HAP-1 (cell line): ENCODE measurements at regions of chr20 and their contacts with region 1.

Region 1: GRCh38 chr20:4607287-4607713 is 114.4 kb upstream of the PRND start:
- DNase-seq: peak; percentile 72 to 76
- H3K4me3 ChIP-seq: no peak overlapping the region
- H3K4me1 ChIP-seq: peaks cover 6% of the 10 kb centered on the region
- H3K27me3 ChIP-seq: peaks cover 21% of the 10 kb centered on the region

Region 2: DNA sequence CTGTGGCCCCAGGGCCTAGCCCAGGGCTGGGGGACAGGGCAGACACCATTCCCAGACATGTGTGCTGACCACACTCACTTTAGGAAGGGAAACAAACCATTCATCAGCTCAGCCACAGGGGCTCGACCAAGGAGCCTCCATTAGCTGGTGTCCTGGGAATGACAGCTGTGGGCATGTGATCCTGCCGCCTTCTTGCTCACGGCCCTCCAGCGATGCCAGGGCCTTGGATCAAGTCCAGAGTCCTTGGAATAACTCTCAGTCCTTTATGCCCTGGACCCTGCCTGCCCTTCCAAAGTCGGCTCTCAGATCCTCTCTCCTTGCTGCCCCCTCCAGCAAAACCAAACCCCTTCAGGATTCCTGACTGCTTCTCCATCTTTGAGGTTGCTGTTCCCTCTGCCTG is 426.9 kb before region 1 on chr20:
- in situ Hi-C with region 1: no loop called
- DNase-seq: no peak
- H3K4me3 ChIP-seq: no peak overlapping the region
- H3K4me1 ChIP-seq: no peaks in the 10 kb centered on the region
- H3K27me3 ChIP-seq: no peaks in the 10 kb centered on the region

Region 3: GRCh38 chr20:4512891-4513550 is 94.3 kb before region 1 on chr20:
- in situ Hi-C with region 1: no loop called
- DNase-seq: no peak
- H3K4me3 ChIP-seq: no peak overlapping the region
- H3K4me1 ChIP-seq: no peaks in the 10 kb centered on the region
- H3K27me3 ChIP-seq: no peaks in the 10 kb centered on the region

Region 4: DNA sequence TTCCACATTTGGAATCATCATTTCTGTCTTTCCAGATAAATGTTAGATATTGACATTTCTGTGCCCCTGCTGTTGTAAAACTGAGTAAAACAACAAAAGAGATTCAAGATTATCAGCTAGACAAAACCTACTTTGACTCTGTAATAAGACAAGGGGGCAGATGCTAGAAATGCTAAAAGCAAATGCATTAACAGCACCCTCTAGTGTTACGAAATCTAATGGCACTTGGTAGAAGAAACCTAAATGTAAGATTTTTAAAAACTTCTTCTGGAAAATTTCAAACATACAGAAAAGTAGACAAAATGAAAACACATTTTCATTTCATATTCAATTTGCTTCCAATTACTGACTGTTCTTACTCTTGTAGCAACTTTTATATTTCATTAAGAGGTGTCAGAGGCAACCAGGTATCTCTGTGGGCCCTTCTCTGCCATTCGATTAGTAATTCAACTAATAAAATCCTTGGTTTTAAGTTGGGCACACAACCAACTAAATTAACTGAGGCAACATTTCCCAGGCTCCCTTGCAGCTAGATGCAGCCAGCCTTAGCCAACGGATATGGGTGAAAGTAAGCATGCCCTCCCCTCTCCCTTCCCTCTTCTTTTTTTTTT is 349.0 kb after region 1 on chr20:
- in situ Hi-C with region 1: loop called (anchors 25 kb)
- DNase-seq: peak in 1 of 2 experiments; percentile 51
- H3K4me3 ChIP-seq: no peak overlapping the region
- H3K4me1 ChIP-seq: no peaks in the 10 kb centered on the region
- H3K27me3 ChIP-seq: no peaks in the 10 kb centered on the region

Region 5: GRCh38 chr20:5078399-5078958 is 471.2 kb after region 1 on chr20:
- in situ Hi-C with region 1: loop called (anchors 25 kb)
- DNase-seq: no peak
- H3K4me3 ChIP-seq: no peak overlapping the region
- H3K4me1 ChIP-seq: peaks cover 7% of the 10 kb centered on the region; the same call in 1 of the 2 replicates
- H3K27me3 ChIP-seq: no peaks in the 10 kb centered on the region

Region 6: DNA sequence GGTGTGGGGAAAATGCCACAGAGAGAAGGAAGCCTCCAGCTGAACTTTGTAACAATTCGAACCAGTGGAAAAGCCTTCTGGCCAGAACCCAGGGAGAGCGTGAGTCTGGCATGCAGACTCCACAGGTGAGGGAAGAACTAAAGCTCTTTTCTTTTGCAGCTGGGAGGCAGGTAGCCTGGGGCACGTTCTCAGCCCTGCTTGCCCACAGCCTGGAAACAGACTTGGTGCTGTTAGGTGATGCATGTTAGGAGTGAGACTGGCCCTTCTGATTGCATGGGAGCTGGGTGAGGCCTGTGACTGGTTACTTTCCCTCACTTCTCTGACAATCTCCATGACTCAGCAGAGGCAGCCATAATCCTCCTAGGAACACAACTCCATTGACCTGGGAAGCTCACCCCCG is 675.3 kb after region 1 on chr20:
- in situ Hi-C with region 1: no loop called
- DNase-seq: no peak
- H3K4me3 ChIP-seq: no peak overlapping the region
- H3K4me1 ChIP-seq: no peaks in the 10 kb centered on the region
- H3K27me3 ChIP-seq: no peaks in the 10 kb centered on the region